A549 (cell line): ENCODE measurements at regions of chr2 and their contacts with region 1.

Region 1: DNA sequence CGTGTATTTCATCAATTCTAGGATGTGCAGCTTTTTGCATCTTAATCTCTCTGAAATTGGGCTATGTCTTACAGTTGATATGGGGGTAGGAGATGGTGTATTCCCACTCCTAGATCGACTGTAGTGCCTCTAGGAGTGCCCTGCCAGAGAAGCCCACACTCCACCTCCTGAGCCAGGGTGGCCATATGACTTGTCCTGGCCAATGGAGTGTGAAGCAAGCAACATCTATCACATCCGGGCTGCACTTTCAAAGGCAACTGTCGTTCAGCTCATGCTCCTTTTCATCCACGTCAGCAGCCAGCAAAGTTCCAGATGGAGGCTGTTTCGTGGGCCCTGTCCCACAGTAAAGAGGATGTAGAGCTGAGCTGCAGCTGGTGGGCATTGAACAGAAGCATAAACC is 149.4 kb upstream of the SLC1A4 start:
- DNase-seq: no peak
- ATAC-seq: no peak
- H3K4me3 ChIP-seq: no peak overlapping the region
- H3K27ac ChIP-seq: peak overlapping the region in 1 of 2 experiments; percentile 87; a peak in 3 of 6 replicates
- H3K4me1 ChIP-seq: peaks cover 50% of the 10 kb centered on the region
- CTCF ChIP-seq: no peak
- EP300 ChIP-seq: no peak
- POLR2A ChIP-seq: no peak
- RAD21 ChIP-seq: no peak

Region 2: DNA sequence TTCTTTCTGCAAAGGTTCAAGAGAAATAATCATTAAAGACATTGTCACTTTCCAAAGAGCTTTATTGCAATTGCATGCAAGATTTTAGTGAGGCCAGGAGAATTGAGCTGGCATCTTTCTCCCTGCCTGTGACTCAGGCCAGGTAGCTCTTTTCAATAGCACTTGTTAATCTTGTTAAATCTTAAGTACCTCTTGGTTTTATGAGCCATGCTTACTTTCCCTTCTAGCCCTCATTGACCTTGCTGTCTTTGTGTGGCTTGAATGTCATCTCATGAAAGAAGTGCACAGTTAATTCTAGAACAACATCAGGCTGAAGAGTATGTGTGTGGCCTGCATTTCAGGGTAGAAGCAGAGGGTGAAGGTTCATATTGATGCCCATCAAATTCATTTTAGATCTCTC is 400.6 kb before region 1 on chr2:
- CTCF ChIA-PET with region 1: no interaction called
- POLR2A ChIA-PET with region 1: no interaction called
- DNase-seq: no peak
- ATAC-seq: no peak
- H3K4me3 ChIP-seq: no peak overlapping the region
- H3K27ac ChIP-seq: no peak overlapping the region
- H3K4me1 ChIP-seq: no peaks in the 10 kb centered on the region; the same call in 2 of the 3 replicates
- CTCF ChIP-seq: no peak
- EP300 ChIP-seq: no peak
- POLR2A ChIP-seq: no peak
- RAD21 ChIP-seq: no peak

Region 3: DNA sequence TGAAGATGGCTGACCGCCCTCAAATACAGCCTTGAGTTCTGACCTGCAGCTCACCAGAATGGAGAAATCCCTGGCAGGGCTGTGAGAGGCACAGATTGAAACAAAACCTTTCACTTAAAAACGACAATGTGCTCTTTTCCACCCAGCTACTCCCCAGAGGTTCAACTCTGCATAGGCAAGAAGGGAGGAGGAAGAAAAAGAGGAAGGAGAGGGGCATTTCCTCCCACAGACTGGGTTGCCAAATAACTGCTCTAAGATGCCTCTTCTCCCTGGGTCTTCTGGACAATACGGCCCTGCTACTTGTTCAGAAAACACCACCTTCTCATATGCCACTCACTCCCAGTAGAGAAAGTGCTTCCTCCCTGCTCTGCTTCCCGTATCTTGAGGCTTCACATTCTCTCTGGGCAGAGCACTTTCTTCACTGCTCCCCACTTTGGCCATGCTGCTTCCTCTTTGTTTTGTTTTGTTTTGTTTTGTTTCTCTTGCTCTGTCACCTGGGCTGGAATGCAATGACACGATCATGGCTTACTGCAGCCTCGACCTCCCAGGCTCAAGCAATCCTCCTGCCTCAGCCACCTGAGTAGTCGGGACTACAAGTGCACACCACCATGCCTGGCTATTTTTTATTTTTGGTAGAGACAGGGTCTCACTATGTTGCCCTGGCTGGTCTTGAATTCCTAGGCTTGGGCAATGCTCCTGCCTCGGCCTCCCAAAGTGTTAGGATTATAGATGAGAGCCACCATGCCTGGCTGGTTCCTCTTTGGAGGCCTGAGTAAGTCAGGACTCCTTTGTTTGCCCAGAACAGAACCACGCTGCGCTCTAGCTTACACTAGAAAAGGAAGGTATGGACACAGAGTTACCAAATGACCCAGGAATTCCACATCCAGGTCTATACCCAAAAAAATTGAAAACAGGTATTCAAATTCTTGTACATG is 13.2 kb after region 1 on chr2:
- CTCF ChIA-PET with region 1: interaction called, 29 read pairs
- POLR2A ChIA-PET with region 1: no interaction called
- DNase-seq: no peak
- ATAC-seq: no peak
- H3K4me3 ChIP-seq: no peak overlapping the region
- H3K27ac ChIP-seq: no peak overlapping the region
- H3K4me1 ChIP-seq: peaks cover 6% of the 10 kb centered on the region; the same call in 1 of the 3 replicates
- CTCF ChIP-seq: no peak
- EP300 ChIP-seq: no peak
- POLR2A ChIP-seq: no peak
- RAD21 ChIP-seq: no peak

Region 4: GRCh38 chr2:64859312-64860212 is 19.7 kb after region 1 on chr2:
- CTCF ChIA-PET with region 1: interaction called, 29 read pairs
- POLR2A ChIA-PET with region 1: interaction called, 21 read pairs
- DNase-seq: peak; percentile 83 to 93
- ATAC-seq: peak; percentile 83 to 89
- H3K4me3 ChIP-seq: peak overlapping the region; percentile 43
- H3K27ac ChIP-seq: peak overlapping the region; percentile 81 to 90
- H3K4me1 ChIP-seq: peaks cover 26% of the 10 kb centered on the region
- CTCF ChIP-seq: peak; percentile 28; the same call in 2 of the 3 replicates
- EP300 ChIP-seq: no peak
- POLR2A ChIP-seq: peak; percentile 59
- RAD21 ChIP-seq: peak; percentile 1 to 22; a peak in 3 of 5 replicates

Region 5: GRCh38 chr2:65159906-65160305 is 320.1 kb after region 1 on chr2:
- CTCF ChIA-PET with region 1: no interaction called
- POLR2A ChIA-PET with region 1: no interaction called
- DNase-seq: no peak
- ATAC-seq: no peak
- H3K4me3 ChIP-seq: no peak overlapping the region
- H3K27ac ChIP-seq: no peak overlapping the region
- H3K4me1 ChIP-seq: peaks cover 14% of the 10 kb centered on the region
- CTCF ChIP-seq: no peak
- EP300 ChIP-seq: no peak
- POLR2A ChIP-seq: no peak
- RAD21 ChIP-seq: no peak